WTC11 (cell line): ENCODE measurements at regions of chr6 and their contacts with region 1.

Region 1: GRCh38 chr6:99588618-99589289 is 17.9 kb upstream of the PRDM13 start:
- DNase-seq: peak; percentile 88
- ATAC-seq: peak; percentile 80
- H3K4me3 Mint-ChIP-seq: peak overlapping the region; percentile 73
- H3K27ac Mint-ChIP-seq: no peak overlapping the region
- H3K4me1 Mint-ChIP-seq: peaks cover 20% of the 10 kb centered on the region
- H3K27me3 Mint-ChIP-seq: peaks cover 92% of the 10 kb centered on the region
- CTCF ChIP-seq: no peak

Region 2: DNA sequence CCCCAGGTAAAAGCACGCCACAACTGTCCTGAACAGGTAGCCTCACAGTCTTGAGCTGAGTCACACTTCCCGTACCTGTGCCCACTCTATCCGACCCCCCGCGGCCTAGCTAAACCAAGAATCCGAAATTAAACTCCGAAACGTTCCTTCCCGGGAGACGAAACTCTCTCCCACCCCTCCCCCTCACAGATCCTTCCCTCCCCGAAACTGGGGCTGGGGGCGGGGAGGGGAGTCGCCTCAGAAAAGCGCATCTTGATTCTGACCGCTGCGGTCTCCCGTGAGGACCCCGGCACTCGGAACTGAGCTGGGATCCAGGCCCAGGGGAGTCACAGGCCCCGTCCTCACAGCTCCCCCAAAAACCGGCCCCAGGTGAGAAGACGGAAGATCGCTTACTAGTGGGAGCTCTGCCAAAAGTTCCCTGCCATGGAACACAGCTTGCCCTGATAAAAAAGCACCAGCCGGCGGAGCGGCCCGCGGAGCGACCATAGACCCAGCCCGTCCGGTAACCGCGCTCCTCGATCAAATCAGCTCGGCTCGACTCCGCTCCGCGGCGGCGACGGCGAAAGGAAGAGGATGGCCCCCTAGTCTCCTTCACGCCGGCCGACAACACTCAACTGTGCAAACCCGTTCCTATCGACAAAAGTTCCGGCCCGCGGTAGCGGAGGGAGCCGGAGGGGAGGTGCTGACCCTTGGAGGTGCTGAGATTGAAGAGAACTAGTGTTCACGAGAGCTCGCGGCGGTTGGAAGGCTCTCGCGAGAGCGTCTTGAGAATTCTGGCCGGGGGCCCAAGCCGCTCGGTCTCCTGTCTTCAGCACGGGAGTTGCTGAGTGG is 20.4 kb before region 1 on chr6 and contains the start of gene CCNC:
- CTCF ChIA-PET with region 1: interaction called, 10 read pairs
- POLR2A ChIA-PET with region 1: interaction called, 13 read pairs
- DNase-seq: peak; percentile 96
- ATAC-seq: peak; percentile 97
- H3K4me3 Mint-ChIP-seq: peak within 1 kb of the TSS; percentile 94
- H3K27ac Mint-ChIP-seq: peak within 1 kb of the TSS; percentile 99
- H3K4me1 Mint-ChIP-seq: peaks cover 16% of the 10 kb centered on the region
- H3K27me3 Mint-ChIP-seq: no peaks in the 10 kb centered on the region; the same call in 1 of the 2 replicates
- CTCF ChIP-seq: no peak
- total RNA-seq, gene CCNC: 82.2 to 93.1 TPM (median 86.8 TPM) in 3 replicates

Region 3: DNA sequence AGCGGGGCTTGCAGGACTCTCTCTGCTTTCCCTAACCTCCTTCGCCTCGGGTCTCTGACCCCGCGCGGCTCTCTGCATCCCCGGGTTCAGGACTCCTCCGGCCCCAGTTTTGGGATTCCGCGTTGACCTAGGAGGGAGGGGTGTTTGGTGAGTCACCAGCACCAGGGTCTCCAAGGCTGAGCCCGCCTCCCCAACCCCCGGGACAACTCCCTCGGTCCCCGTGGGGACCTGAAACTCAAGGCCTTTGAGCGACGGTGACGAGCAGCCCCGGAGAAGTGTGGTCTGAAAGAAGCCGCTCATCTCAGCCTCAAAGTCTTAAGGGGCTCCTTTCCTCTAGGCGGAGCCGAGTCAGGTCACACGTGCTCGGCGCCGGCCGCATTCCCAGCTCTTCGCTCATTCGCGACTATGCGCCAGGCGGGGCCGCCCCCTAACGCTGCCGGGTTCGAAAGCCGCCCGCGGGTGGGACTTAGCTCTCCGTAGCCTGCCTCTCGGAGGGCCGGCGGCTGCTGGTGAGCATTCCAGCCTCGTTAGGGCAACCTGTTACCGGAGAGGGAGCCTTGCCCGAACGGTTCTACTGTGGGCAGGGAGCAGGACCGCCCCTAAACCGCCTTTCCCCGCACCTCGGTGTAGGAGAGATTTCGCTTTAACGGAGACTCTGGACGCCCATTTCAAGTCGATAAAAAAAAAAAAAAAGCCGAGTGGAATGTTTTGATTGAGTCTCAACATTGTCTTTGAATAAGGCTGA is 14.8 kb after region 1 on chr6:
- CTCF ChIA-PET with region 1: interaction called, 34 read pairs
- POLR2A ChIA-PET with region 1: interaction called, 3 read pairs
- DNase-seq: peak; percentile 84
- ATAC-seq: peak; percentile 62
- H3K4me3 Mint-ChIP-seq: peak overlapping the region; percentile 62
- H3K27ac Mint-ChIP-seq: no peak overlapping the region
- H3K4me1 Mint-ChIP-seq: peaks cover 51% of the 10 kb centered on the region
- H3K27me3 Mint-ChIP-seq: peaks cover 100% of the 10 kb centered on the region
- CTCF ChIP-seq: no peak

Region 4: DNA sequence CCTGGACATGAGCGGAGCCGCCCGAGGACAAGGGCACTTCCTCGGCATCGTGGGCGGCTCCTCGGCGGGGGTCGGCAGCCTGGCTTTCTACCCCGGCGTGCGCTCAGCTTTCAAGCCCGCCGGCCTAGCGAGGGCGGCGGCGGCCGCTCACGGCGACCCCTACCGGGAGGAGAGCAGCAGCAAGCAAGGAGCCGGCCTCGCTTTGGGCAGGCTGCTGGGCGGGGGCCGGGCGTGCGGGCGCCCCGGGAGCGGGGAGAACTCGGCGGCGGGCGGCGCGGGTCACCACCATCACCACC is 24.6 kb after region 1 on chr6:
- CTCF ChIA-PET with region 1: interaction called, 13 read pairs
- POLR2A ChIA-PET with region 1: interaction called, 3 read pairs
- DNase-seq: peak; percentile 79
- ATAC-seq: peak; percentile 58
- H3K4me3 Mint-ChIP-seq: peak overlapping the region; percentile 60
- H3K27ac Mint-ChIP-seq: no peak overlapping the region
- H3K4me1 Mint-ChIP-seq: peaks cover 44% of the 10 kb centered on the region
- H3K27me3 Mint-ChIP-seq: peaks cover 99% of the 10 kb centered on the region
- CTCF ChIP-seq: no peak

Region 5: GRCh38 chr6:99618649-99619408 is 30.1 kb after region 1 on chr6:
- CTCF ChIA-PET with region 1: interaction called, 13 read pairs
- POLR2A ChIA-PET with region 1: no interaction called
- DNase-seq: peak; percentile 84
- ATAC-seq: peak; percentile 83
- H3K4me3 Mint-ChIP-seq: peak overlapping the region; percentile 69
- H3K27ac Mint-ChIP-seq: no peak overlapping the region
- H3K4me1 Mint-ChIP-seq: peaks cover 7% of the 10 kb centered on the region
- H3K27me3 Mint-ChIP-seq: peaks cover 100% of the 10 kb centered on the region
- CTCF ChIP-seq: no peak